AG04449 (cell line): ENCODE measurements at regions of chr1 and their contacts with region 1.

Region 1: GRCh38 chr1:108559215-108560186 is at the start of gene EEIG2:
- DNase-seq: no peak
- H3K4me3 ChIP-seq: peak within 1 kb of the TSS; percentile 70
- CTCF ChIP-seq: peak; percentile 69

Region 2: DNA sequence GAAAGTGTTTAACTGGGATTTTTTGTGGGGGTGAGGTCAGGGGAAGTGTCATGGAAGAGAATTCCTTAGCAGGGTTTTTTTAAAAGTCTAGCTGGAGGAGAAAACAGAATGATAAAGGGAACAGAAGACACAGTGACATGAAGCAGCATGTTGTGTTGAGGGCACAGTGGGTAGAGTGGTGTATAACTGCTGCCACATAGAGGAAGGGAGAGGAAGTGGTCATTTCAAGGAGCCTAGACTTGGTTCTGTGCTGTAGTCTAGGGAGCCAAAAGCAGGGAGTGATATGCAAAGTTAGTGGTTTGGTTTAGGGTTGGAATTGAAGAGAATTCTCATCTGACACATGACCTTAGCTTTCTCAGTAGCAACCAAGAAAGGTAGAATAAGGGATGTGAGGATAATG is 10.6 kb after region 1 on chr1:
- CTCF ChIA-PET with region 1: interaction called, 26 read pairs
- POLR2A ChIA-PET with region 1: interaction called, 3 read pairs
- DNase-seq: no peak
- H3K4me3 ChIP-seq: no peak overlapping the region
- CTCF ChIP-seq: peak; percentile 22

Region 3: DNA sequence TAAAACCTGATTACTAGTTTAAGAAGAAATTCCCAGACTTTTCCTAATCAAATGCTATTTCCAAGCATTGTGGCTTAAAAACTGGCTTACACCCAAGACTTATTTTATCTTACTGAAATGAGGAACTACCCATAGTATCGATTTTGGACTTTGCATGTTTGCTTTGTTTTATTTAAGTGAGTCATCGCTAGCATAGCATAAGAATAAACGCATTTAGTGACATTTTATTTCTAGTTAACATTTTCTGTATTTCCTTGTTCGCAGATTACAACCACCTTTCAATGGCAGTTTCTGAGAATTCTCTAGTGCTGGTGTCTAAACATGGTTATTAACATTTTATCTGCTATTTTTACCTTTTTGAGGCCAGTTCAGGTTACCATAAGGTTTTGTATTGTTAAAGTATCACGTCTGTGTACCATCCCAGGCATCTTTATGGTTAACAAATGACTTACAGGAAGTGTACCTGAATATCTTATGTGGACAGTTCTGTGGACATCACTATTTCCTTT is 24.9 kb after region 1 on chr1:
- CTCF ChIA-PET with region 1: interaction called, 31 read pairs
- POLR2A ChIA-PET with region 1: no interaction called
- DNase-seq: no peak
- H3K4me3 ChIP-seq: no peak overlapping the region
- CTCF ChIP-seq: no peak

Region 4: DNA sequence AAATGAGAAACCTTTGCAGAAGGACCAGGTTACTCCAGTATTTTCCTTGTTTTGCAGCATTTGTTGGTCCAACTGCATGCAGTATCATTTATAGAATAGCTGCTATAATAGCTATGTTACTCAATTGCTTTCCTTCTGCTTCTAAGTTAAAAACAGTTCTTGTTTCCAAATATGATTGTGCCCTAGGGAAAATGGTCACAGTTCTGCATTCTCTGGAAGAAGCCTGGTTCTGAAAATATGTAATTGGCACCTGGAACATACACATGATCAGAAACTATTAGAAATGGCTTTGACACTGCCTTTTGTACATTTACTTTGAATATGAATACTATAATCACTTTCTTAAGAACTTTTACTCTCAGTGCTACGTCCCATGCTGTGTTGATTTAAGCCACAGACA is 67.8 kb after region 1 on chr1:
- CTCF ChIA-PET with region 1: interaction called, 16 read pairs
- POLR2A ChIA-PET with region 1: no interaction called
- DNase-seq: no peak
- H3K4me3 ChIP-seq: no peak overlapping the region
- CTCF ChIP-seq: no peak